Endothelial cell of umbilical vein (primary cell): ENCODE measurements at regions of chr1 and their contacts with region 1.

Region 1: GRCh38 chr1:15430787-15431570 is 7.3 kb upstream of the CTRC start:
- DNase-seq: peak; percentile 47
- H3K4me3 ChIP-seq: no peak overlapping the region
- H3K27ac ChIP-seq: no peak overlapping the region
- H3K4me1 ChIP-seq: no peaks in the 10 kb centered on the region
- H3K27me3 ChIP-seq: no peaks in the 10 kb centered on the region
- CTCF ChIP-seq: peak; percentile 86 to 90
- POLR2A ChIP-seq: no peak

Region 2: GRCh38 chr1:15304701-15305467 is 126.1 kb before region 1 on chr1:
- CTCF ChIA-PET with region 1: interaction called, 6 read pairs
- POLR2A ChIA-PET with region 1: no interaction called
- dilution Hi-C with region 1: no loop called
- intact Hi-C with region 1: loop called (anchors 1 kb)
- DNase-seq: peak; percentile 49
- H3K4me3 ChIP-seq: no peak overlapping the region
- H3K27ac ChIP-seq: no peak overlapping the region
- H3K4me1 ChIP-seq: no peaks in the 10 kb centered on the region
- H3K27me3 ChIP-seq: no peaks in the 10 kb centered on the region
- CTCF ChIP-seq: peak; percentile 85 to 87
- POLR2A ChIP-seq: no peak

Region 3: DNA sequence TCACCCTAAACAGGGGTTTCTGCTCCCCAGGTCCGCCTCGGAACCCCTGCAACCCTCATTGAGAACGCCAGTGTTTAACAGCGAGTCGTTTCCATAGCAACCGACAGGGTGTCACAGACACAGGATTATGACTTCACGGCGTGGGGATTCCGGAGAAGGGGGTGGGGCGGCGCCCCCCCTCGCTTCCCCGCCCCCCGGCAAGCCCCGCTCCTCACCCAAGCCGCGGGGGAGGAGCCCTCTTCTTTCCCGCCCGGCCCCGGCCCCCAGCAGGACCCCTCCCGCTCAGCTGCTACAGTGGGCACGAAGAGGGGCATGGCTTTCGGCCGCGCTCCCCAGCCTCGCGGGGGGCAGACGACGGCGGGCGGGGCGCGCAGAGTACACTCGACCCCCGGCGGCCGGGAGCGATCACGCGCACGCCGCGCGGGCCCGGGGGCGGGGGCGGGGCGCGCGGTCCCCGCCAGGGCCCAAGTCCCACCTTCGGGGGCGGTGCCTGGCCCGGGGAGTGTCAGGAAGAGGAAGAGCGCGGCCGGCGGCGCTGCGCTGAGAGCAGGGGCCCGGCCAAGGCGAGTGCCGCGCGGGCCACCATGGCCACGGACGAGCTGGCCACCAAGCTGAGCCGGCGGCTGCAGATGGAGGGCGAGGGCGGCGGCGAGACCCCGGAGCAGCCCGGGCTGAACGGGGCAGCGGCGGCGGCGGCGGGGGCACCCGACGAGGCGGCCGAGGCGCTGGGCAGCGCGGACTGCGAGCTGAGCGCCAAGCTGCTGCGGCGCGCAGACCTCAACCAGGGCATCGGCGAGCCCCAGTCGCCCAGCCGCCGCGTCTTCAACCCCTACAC is 21.4 kb before region 1 on chr1 and contains the start of gene EFHD2:
- CTCF ChIA-PET with region 1: interaction called, 33 read pairs
- POLR2A ChIA-PET with region 1: no interaction called
- dilution Hi-C with region 1: no loop called
- intact Hi-C with region 1: no loop called
- DNase-seq: peak; percentile 73
- H3K4me3 ChIP-seq: peak within 1 kb of the TSS; percentile 82 to 90 (median 82)
- H3K27ac ChIP-seq: peak within 1 kb of the TSS; percentile 58
- H3K4me1 ChIP-seq: peaks cover 32% of the 10 kb centered on the region
- H3K27me3 ChIP-seq: no peaks in the 10 kb centered on the region
- CTCF ChIP-seq: no peak
- POLR2A ChIP-seq: peak; percentile 89
- total RNA-seq, gene EFHD2: 65.5 and 73.5 TPM in 2 replicates

Region 4: GRCh38 chr1:15444468-15445389 is 13.8 kb after region 1 on chr1:
- CTCF ChIA-PET with region 1: interaction called, 13 read pairs
- POLR2A ChIA-PET with region 1: no interaction called
- dilution Hi-C with region 1: no loop called
- intact Hi-C with region 1: no loop called
- DNase-seq: no peak
- H3K4me3 ChIP-seq: no peak overlapping the region
- H3K27ac ChIP-seq: no peak overlapping the region
- H3K4me1 ChIP-seq: no peaks in the 10 kb centered on the region
- H3K27me3 ChIP-seq: peaks cover 0 to 2% of the 10 kb centered on the region in 2 experiments
- CTCF ChIP-seq: no peak
- POLR2A ChIP-seq: no peak